ENCODE measurements at regions of chr10 and their contacts with region 1.

Region 1: GRCh38 chr10:3043512-3044368 is 23.6 kb upstream of the PFKP start:
- DNase-seq: no peak

Region 2: GRCh38 chr10:1962025-1962424 is 1081.7 kb before region 1 on chr10:
- intact Hi-C with region 1: no loop called
- DNase-seq: no peak

Region 3: GRCh38 chr10:2839081-2839725 is 204.5 kb before region 1 on chr10:
- intact Hi-C with region 1: loop called (anchors 10 kb)
- DNase-seq: no peak

Region 4: DNA sequence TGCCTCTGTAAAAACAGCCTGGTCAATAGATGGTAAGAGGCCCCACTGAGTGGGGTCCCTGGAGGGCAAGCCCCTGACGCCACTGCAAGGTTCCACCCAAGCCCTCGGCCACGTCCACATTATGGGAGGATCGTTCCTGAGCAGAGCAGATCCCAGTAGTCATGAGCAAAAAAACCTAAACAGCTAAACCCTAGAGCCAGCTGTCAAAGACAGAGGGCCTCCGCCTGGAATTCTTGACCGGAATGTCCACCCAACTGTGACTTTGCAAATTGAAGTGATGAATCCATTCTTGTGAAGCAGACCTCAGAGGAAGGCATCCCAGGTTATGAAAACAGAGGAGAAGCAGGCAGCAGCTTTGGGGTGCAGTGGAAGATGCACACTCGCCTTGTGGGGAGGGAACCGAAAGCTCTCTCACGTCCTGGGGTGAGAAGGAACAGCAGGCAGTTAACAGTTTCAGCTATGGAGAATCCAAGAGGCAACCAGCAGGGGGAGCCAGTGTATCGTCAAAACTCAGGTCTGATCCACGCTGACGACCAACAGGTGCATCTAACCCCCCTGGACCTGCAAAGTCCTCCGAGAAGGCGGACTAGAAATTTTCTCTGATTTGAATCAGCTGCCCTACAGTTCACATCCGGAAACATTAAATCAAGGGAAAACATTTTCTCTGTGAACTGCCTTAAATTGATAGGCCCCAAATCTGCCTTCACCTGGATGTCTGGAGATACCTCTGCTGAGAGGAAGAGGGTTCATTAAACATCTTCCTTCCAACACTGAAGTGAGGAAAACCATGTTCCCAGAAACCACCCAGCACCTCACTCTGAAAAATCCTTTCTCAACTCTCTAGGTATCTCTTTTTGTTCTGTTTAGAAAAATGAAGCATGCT is 115.5 kb before region 1 on chr10:
- intact Hi-C with region 1: loop called (anchors 2 kb)
- DNase-seq: no peak

Region 5: DNA sequence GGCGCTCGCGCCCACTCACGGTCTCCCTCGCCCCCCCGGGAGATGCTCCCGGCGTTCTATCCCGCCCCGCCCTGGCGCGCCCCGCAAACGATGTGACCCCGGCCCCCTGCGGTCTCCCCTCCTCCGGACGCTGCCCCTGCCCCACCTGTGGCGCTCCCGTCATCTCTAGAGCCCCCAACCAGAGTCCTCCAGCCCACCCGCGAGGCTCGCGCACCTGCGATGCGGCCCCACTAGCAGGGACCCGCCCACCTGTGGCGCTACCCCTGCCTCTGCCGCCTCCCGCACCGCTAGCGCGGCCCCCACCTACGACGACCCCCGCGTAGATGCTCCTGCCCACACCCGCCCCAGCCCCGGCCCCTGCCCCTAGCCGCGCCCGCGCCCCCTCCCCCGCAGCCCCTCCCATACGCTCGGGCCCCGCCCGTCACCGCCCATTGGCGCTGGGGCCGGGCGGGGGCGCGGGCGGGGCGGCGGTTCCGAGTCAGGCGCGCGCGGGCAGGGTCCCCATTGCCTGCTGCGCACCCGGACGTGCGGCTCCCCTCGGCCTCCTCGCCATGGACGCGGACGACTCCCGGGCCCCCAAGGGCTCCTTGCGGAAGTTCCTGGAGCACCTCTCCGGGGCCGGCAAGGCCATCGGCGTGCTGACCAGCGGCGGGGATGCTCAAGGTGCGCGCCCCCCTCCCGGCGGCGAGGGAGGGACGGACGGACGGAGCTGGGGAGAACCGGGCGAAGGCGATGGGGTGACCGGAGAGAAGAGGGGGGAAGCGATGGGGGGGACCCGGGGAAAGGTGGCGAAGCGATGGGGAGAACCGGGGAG is 23.5 kb after region 1 on chr10 and contains the start of gene PFKP:
- intact Hi-C with region 1: loop called (anchors 2 kb)
- DNase-seq: no peak
- total RNA-seq, gene PFKP: 215 TPM

Measured in cardiac septum (tissue), 1 donor.